Calu3 (cell line): ENCODE measurements at regions of chr15 and their contacts with region 1.

Region 1: DNA sequence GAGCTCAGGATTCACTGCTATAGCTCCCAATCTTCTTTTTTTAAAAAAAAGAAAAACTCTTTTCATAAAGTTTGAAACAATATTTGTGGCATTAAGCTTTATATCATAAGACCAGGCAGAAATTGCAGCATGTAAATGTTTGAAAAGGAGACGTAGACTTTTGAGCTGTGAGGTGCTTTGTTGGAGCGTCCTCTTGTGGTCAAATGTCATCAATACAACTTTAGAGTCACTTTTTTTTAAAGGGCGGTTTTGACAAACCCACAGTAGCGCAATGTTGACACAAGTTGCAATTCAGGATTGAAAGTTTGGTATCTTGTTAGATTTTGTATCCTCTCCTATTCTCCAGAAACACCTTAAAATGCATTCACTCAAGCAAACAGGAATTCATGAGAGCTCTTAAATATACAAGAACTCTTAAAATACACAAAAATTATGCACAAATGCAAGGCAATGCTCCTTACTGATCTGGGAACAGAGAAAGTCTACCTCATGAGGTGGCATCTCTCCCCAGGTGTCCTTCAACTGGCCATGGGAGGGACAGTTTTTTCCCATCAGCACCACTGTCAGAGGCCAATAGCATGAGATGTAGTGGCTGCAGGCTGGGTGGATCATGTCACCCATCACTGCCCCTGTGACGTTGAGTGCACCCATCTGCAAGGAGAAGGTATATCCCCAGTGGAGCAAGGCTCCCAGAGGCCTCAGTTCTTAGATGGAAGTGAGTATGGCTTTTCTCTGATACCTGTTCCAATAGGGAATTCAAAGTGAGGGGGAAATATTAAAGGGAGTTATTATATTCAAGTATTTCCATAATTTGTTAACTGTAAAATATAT is 70.7 kb downstream of the ANXA2 start:
- DNase-seq: peak; percentile 54
- H3K4me3 Mint-ChIP-seq: no peak overlapping the region
- H3K27ac Mint-ChIP-seq: no peak overlapping the region
- H3K4me1 Mint-ChIP-seq: no peaks in the 10 kb centered on the region
- H3K27me3 Mint-ChIP-seq: peaks cover 64% of the 10 kb centered on the region
- CTCF ChIP-seq: peak; percentile 87

Region 2: DNA sequence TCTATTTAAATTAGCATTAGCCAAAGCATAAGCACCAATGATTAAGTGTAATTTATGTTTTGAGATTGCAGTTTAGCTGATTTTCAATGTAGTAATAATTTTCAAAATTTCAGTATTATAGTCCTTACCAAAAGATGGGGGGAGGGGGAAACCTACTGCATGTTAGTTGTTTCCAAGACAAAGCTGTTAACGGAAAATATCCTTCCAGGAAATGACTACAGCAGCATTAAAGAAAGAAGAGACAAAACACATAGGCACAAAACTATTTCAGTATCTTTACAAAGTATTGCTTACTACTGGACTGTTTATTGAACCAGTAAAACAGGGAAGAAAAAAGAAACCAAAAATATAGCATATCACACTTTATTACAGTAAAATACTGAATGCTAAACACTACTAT is 648.4 kb before region 1 on chr15:
- CTCF ChIA-PET with region 1: no interaction called
- intact Hi-C with region 1: no loop called
- DNase-seq: no peak
- H3K4me3 Mint-ChIP-seq: no peak overlapping the region
- H3K27ac Mint-ChIP-seq: no peak overlapping the region
- H3K4me1 Mint-ChIP-seq: peaks cover 7% of the 10 kb centered on the region
- H3K27me3 Mint-ChIP-seq: no peaks in the 10 kb centered on the region
- CTCF ChIP-seq: no peak

Region 3: GRCh38 chr15:59689626-59690236 is 637.3 kb before region 1 on chr15:
- CTCF ChIA-PET with region 1: interaction called, 7 read pairs
- intact Hi-C with region 1: loop called (anchors 2 kb)
- DNase-seq: peak; percentile 85
- H3K4me3 Mint-ChIP-seq: peak overlapping the region; percentile 77
- H3K27ac Mint-ChIP-seq: peak overlapping the region; percentile 29
- H3K4me1 Mint-ChIP-seq: peaks cover 40% of the 10 kb centered on the region
- H3K27me3 Mint-ChIP-seq: no peaks in the 10 kb centered on the region
- CTCF ChIP-seq: no peak

Region 4: DNA sequence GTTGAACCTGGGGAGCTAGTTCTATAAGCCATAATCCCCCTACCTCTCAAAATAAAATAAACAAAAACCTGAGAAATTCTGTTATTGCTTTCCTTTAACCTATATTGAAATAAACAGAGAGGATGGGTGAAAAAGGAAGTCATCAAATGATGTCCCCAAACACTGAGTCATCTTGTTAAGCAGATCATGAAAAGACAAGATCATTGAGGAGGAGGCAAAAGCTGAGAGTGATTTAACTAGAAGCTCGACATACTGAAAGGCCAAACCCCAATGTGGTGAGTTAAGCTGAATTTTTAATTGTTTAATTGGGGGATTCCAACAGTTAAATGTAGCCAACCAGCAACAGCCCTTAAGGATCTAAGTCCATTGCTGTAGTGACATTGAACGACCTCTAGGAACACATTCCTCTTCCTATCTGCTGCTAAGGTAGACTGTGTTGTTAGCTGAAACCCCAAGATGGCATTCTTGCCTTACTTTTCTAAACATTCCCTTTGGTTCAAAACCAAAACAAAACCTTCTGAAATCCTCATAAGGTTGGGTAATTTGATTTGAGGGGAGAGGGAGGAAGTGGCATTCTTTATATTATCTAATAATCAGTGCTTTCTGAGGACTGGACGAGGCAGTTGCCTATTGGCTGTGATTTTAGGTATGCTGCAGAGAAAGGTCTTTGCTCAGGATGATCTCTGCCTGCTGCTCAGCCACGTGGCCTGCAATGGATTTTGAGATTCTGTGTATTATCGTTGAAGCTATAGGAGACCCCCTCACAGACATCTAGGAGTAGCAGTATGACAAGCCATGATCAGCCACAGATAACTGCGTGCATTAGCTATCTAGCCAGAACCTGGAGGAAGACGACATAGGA is 575.3 kb before region 1 on chr15:
- CTCF ChIA-PET with region 1: no interaction called
- intact Hi-C with region 1: loop called (anchors 5 kb)
- DNase-seq: no peak
- H3K4me3 Mint-ChIP-seq: no peak overlapping the region
- H3K27ac Mint-ChIP-seq: no peak overlapping the region
- H3K4me1 Mint-ChIP-seq: peaks cover 20% of the 10 kb centered on the region
- H3K27me3 Mint-ChIP-seq: peaks cover 51% of the 10 kb centered on the region
- CTCF ChIP-seq: peak; percentile 35

Region 5: DNA sequence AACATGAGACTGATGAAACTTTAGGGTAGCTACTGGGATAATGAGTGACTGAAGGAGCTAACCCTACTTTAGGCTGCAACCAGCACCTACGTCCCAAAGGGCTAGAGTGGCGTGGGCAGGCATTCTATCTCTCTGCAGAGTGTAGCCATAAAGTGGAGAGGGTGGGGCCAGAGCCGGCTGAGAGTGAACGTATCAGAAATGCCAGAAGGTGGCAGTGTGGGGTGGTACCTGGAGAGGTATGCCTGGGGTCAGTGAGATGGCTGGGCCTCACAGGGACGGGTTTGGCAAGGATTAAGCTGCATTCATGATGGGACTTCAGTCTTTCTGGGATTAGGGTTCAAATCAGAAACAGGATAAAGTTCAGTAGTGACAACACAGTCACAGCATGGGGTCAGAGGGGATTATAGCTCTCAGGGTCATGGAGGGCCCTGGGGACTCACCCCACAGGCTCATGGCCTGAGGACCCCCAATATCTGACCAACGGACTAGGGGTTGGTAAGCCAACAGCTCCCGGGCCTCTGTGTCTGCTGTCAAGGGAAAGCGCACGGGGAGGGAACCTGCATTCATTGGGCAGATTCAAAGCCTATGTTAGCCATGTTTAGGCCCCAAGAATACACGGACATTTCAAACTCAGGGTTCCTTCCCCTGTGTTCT is 409.4 kb before region 1 on chr15:
- CTCF ChIA-PET with region 1: interaction called, 12 read pairs
- intact Hi-C with region 1: loop called (anchors 1 kb)
- DNase-seq: peak; percentile 94
- H3K4me3 Mint-ChIP-seq: no peak overlapping the region
- H3K27ac Mint-ChIP-seq: no peak overlapping the region
- H3K4me1 Mint-ChIP-seq: peaks cover 25% of the 10 kb centered on the region
- H3K27me3 Mint-ChIP-seq: peaks cover 36% of the 10 kb centered on the region
- CTCF ChIP-seq: peak; percentile 75

Region 6: DNA sequence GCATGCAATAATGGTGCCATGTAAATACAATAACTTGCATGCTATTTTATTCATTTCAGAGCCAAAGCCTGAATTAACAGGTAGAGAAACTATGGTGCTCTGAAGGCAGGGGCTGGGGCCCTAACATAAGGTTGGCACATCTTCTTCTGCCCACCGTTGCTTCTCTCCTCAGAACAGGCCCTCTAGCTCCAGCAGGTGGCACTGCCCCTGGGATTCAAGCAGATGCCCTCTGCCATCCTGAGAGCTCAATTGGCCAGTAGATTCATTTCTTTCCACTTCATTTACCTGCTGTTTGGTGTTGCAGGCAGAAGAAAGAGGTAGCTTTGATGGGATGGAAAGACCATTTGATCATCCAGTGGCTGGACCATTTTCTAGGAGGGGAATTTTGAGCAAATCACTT is 192.4 kb before region 1 on chr15:
- CTCF ChIA-PET with region 1: interaction called, 11 read pairs
- intact Hi-C with region 1: loop called (anchors 5 kb)
- DNase-seq: peak; percentile 55
- H3K4me3 Mint-ChIP-seq: no peak overlapping the region
- H3K27ac Mint-ChIP-seq: no peak overlapping the region
- H3K4me1 Mint-ChIP-seq: no peaks in the 10 kb centered on the region
- H3K27me3 Mint-ChIP-seq: peaks cover 35% of the 10 kb centered on the region
- CTCF ChIP-seq: peak; percentile 58

Region 7: GRCh38 chr15:60179786-60180391 is 147.2 kb before region 1 on chr15:
- CTCF ChIA-PET with region 1: interaction called, 4 read pairs
- intact Hi-C with region 1: loop called (anchors 10 kb)
- DNase-seq: peak; percentile 58
- H3K4me3 Mint-ChIP-seq: no peak overlapping the region
- H3K27ac Mint-ChIP-seq: no peak overlapping the region
- H3K4me1 Mint-ChIP-seq: peaks cover 7% of the 10 kb centered on the region
- H3K27me3 Mint-ChIP-seq: peaks cover 61% of the 10 kb centered on the region
- CTCF ChIP-seq: peak; percentile 66

Region 8: DNA sequence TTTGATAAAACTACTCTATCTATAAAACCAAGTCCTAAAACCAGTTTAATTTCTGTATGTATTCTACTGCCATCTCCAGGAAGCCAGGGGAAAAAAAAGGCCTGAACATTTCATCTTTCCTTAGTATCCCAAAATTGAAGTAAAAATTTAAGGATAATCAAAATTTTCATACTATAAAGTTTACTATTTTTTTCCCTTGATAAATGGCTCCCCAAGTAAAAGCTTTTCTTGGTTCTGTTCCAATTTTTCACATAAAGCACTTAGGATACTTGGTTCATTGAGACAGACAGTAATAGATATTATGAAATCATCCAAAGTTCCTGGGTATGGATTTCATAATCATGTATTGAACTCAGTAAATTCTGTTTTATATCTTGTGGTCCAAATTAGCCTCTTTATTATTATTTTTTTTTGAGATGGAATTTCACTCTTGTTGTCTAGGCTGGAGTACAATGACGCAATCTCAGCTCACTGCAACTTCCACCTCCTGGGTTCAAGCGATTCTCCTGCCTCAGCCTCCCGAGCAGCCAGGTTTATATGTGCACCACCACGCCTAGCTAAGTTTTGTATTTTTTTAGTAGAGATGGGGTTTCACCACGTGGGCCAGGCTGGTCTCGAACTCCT is 117.4 kb after region 1 on chr15:
- CTCF ChIA-PET with region 1: interaction called, 3 read pairs
- intact Hi-C with region 1: loop called (anchors 1 kb)
- DNase-seq: peak; percentile 13
- H3K4me3 Mint-ChIP-seq: no peak overlapping the region
- H3K27ac Mint-ChIP-seq: peak overlapping the region; percentile 12
- H3K4me1 Mint-ChIP-seq: peaks cover 16% of the 10 kb centered on the region
- H3K27me3 Mint-ChIP-seq: no peaks in the 10 kb centered on the region
- CTCF ChIP-seq: peak; percentile 17